CD4-positive, alpha-beta T cell (primary cell): ENCODE measurements at regions of chr15 and their contacts with region 1.

Region 1: DNA sequence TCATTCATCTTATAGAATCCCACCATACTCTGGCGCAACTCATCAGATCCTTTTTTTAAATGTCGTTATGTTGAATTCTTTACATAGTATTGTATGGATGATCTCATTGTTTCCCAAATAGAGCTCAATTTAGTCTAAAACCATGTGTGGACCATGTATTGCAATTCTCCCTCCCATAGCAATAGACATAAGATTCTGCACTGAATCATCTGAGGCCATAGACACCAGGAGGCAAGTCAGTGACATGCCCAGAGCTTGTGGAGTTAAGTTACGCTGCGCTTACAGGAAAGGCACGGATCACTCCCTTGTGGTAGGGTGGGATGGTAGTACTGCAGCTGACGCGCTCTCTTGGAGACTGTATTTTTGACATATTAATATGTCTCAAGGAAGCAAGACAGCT is 211.0 kb downstream of the GABRB3 start:
- DNase-seq: no peak
- ATAC-seq: no peak
- H3K4me3 ChIP-seq: no peak overlapping the region
- H3K4me3 Mint-ChIP-seq: no peak overlapping the region
- H3K27ac ChIP-seq: no peak overlapping the region
- H3K27ac Mint-ChIP-seq: no peak overlapping the region
- H3K4me1 ChIP-seq: no peaks in the 10 kb centered on the region
- H3K4me1 Mint-ChIP-seq: no peaks in the 10 kb centered on the region
- H3K27me3 ChIP-seq: no peaks in the 10 kb centered on the region
- H3K27me3 Mint-ChIP-seq: no peaks in the 10 kb centered on the region
- CTCF ChIP-seq: no peak

Region 2: GRCh38 chr15:26504009-26504408 is 57.9 kb before region 1 on chr15:
- CTCF ChIA-PET with region 1: no interaction called
- POLR2A ChIA-PET with region 1: no interaction called
- intact Hi-C with region 1: loop called in 1 of 2 experiments (anchors 10 kb)
- DNase-seq: no peak
- ATAC-seq: no peak
- H3K4me3 ChIP-seq: no peak overlapping the region
- H3K4me3 Mint-ChIP-seq: no peak overlapping the region
- H3K27ac ChIP-seq: no peak overlapping the region
- H3K27ac Mint-ChIP-seq: no peak overlapping the region
- H3K4me1 ChIP-seq: no peaks in the 10 kb centered on the region
- H3K4me1 Mint-ChIP-seq: no peaks in the 10 kb centered on the region
- H3K27me3 ChIP-seq: no peaks in the 10 kb centered on the region
- H3K27me3 Mint-ChIP-seq: no peaks in the 10 kb centered on the region
- CTCF ChIP-seq: no peak